Sigmoid colon (tissue), 7 donors: ENCODE measurements at regions of chr5 and their contacts with region 1.

Region 1: GRCh38 chr5:43772764-43773477 is 169.9 kb downstream of the NNT start:
- DNase-seq: no peak
- H3K4me3 ChIP-seq: no peak overlapping the region
- H3K27ac ChIP-seq: no peak overlapping the region
- H3K4me1 ChIP-seq: peaks cover 0 to 16% (median 12%) of the 10 kb centered on the region in 4 donors
- H3K27me3 ChIP-seq: no peaks in the 10 kb centered on the region
- CTCF ChIP-seq: no peak
- EP300 ChIP-seq: no peak
- POLR2A ChIP-seq: no peak

Region 2: GRCh38 chr5:43661102-43661501 is 111.8 kb before region 1 on chr5:
- intact Hi-C with region 1: no loop called
- DNase-seq: no peak
- H3K4me3 ChIP-seq: no peak overlapping the region
- H3K27ac ChIP-seq: no peak overlapping the region
- H3K4me1 ChIP-seq: peaks cover 0 to 26% (median 18%) of the 10 kb centered on the region in 4 donors
- H3K27me3 ChIP-seq: no peaks in the 10 kb centered on the region
- CTCF ChIP-seq: peak in 2 of 4 experiments; percentile 34 to 42
- EP300 ChIP-seq: no peak
- POLR2A ChIP-seq: no peak

Region 3: DNA sequence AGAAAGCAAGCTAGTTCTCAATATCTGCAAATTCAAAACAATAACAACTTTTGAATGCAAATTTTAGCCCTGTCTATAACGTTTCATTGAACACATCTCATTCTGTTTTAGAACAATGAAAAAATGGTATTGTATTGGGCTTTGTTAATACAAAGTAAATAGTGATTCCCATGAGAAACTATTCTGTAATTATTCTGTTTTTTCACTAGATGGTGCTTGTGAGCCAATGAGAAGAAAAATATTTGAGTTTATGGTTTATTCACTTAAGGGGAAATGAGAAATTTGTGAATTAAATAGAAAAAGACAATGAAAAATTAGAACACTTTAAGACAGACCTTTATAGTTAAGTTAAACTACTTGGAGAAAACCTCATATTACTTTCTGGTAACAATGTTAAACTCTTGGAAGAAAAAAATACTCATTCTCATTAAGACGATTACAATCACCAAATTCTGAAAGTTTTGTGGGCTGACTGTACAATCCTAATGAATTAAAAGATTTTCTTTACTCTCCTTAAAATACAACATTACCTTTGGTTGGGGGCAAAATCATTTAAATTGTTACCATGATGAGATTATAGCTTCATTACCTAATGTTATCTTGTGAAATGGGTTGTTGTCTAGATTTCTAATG is 43.0 kb before region 1 on chr5:
- intact Hi-C with region 1: no loop called
- DNase-seq: no peak
- H3K4me3 ChIP-seq: no peak overlapping the region
- H3K27ac ChIP-seq: no peak overlapping the region
- H3K4me1 ChIP-seq: peaks cover 0 to 9% (median 4%) of the 10 kb centered on the region in 4 donors
- H3K27me3 ChIP-seq: no peaks in the 10 kb centered on the region
- CTCF ChIP-seq: peak in 3 of 4 experiments; percentile 11 to 56 (median 51)
- EP300 ChIP-seq: no peak
- POLR2A ChIP-seq: no peak

Region 4: DNA sequence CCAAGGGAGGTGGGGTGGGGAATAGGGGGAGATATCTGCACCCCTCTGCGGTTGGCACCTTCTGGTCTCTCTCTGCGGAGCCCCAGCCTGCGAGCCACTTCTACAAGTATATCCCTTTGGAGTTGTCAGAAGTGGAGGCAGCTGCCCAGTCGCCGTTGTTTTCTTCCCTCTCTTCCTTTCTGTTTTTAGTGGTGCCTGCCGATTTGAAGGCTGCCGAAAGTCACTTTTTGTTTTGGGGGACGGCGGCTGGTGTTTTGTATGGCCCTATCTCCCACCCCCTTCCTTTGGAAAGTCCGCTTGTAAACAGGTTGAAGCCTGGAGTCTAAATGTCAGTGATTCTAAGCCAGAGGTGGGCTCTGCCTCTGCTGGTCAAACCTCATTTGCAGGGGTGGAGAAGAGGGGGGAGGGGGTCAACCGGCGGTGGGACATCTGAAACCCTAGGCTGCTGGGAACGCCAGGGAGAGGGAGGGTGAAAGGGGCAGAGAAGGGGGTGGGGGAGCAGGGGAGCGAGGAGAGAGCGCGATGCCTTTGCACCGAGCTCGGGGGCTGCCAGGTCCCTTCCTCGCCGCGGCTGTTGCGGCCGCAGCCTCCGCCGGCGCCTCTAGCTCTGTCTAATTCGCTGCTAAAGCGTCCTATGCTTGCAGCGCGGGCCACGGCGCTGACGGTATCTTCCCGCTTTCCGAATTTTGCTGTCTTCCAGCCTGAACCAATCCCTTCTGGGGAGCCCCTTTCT is 616.3 kb after region 1 on chr5 and contains the start of gene FGF10:
- intact Hi-C with region 1: loop called (anchors 5 kb)
- DNase-seq: peak; percentile 79
- H3K4me3 ChIP-seq: peak within 1 kb of the TSS; percentile 57 to 60 (median 59)
- H3K27ac ChIP-seq: peak within 1 kb of the TSS; percentile 63 to 85 (median 81)
- H3K4me1 ChIP-seq: peaks cover 0 to 16% (median 8%) of the 10 kb centered on the region in 4 donors
- H3K27me3 ChIP-seq: no peaks in the 10 kb centered on the region
- CTCF ChIP-seq: no peak
- EP300 ChIP-seq: no peak
- POLR2A ChIP-seq: peak in 1 of 2 donors; percentile 8
- total RNA-seq, gene FGF10: 25.8 to 44.9 (median 27.4) TPM